ENCODE measurements at regions of chr5 and their contacts with region 1.

Region 1: GRCh38 chr5:136579238-136579637 is 213.9 kb upstream of the TRPC7 start:
- DNase-seq: no peak
- H3K4me3 ChIP-seq: no peak overlapping the region
- H3K27ac ChIP-seq: no peak overlapping the region
- H3K4me1 ChIP-seq: no peaks in the 10 kb centered on the region
- H3K27me3 ChIP-seq: no peaks in the 10 kb centered on the region
- CTCF ChIP-seq: no peak
- POLR2A ChIP-seq: no peak

Region 2: DNA sequence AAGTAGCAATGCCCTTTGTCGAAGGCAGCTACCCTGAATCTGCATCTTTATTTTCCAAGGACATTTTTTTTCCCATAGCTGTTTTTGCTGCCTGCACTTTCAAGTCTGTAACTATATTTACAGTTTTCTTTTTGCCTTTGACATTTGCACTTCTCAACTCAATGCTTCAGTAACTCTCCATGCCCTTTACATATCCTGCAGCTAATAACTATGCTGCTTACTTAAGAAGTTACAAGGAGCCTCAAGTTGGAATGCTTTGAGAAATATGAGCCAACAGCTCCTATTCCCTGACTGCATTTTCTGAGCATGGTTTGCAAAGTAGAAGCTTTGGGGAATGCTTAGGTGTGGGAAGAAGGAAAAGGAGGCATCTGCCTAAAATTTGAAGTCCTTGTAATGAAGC is 19.1 kb before region 1 on chr5:
- intact Hi-C with region 1: no loop called
- DNase-seq: no peak
- H3K4me3 ChIP-seq: no peak overlapping the region
- H3K27ac ChIP-seq: no peak overlapping the region
- H3K4me1 ChIP-seq: no peaks in the 10 kb centered on the region
- H3K27me3 ChIP-seq: no peaks in the 10 kb centered on the region
- CTCF ChIP-seq: no peak
- POLR2A ChIP-seq: no peak

Region 3: GRCh38 chr5:136638077-136638476 is 58.8 kb after region 1 on chr5:
- intact Hi-C with region 1: no loop called
- DNase-seq: no peak
- H3K4me3 ChIP-seq: no peak overlapping the region
- H3K27ac ChIP-seq: no peak overlapping the region
- H3K4me1 ChIP-seq: no peaks in the 10 kb centered on the region
- H3K27me3 ChIP-seq: no peaks in the 10 kb centered on the region
- CTCF ChIP-seq: no peak
- POLR2A ChIP-seq: no peak

Region 4: DNA sequence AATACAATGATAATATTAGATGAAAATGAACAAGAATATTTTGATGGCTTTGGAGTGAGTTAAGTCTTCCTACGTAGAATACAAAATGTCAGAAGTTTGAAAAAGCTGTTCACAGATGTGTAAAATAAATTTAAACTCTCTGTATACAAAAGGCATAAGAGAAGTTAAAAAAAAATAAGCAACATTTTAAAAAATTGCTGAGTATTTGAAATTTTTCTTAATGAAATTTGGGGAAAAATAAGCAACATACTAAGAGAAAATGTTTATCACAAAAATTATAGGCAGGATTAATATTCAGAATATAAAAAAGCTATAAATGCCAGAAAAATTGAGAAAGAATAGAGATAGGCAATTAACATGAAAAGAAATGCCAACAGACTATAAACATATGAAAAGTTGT is 256.9 kb after region 1 on chr5:
- intact Hi-C with region 1: loop called (anchors 5 kb)
- DNase-seq: no peak
- H3K4me3 ChIP-seq: no peak overlapping the region
- H3K27ac ChIP-seq: no peak overlapping the region
- H3K4me1 ChIP-seq: no peaks in the 10 kb centered on the region
- H3K27me3 ChIP-seq: no peaks in the 10 kb centered on the region
- CTCF ChIP-seq: no peak
- POLR2A ChIP-seq: no peak

Region 5: DNA sequence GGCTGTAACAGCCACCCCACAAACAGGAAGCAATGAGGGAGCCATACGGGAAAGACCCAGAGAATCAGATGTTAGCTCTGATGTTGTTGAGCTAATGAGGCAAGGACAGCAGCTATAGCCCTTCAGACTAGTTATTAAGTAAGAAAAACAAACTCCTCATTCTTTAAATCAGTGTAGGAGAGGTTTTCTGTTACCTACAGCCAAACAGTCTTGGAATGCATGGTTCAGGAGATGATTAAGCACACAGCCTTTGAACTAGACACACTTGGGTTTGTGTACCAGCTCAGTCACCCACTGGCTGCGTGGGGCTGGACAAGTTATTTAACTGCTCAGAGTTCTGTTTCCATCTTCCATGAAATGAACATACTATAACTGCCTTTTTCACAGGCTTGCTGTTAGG is 851.8 kb after region 1 on chr5:
- intact Hi-C with region 1: no loop called
- DNase-seq: no peak
- H3K4me3 ChIP-seq: no peak overlapping the region
- H3K27ac ChIP-seq: no peak overlapping the region
- H3K4me1 ChIP-seq: no peaks in the 10 kb centered on the region
- H3K27me3 ChIP-seq: peaks cover 0 to 3% of the 10 kb centered on the region in 2 donors
- CTCF ChIP-seq: no peak
- POLR2A ChIP-seq: no peak

Measured in breast epithelium (tissue), 4 donors.